H1 (cell line): ENCODE measurements at regions of chr14 and their contacts with region 1.

Region 1: DNA sequence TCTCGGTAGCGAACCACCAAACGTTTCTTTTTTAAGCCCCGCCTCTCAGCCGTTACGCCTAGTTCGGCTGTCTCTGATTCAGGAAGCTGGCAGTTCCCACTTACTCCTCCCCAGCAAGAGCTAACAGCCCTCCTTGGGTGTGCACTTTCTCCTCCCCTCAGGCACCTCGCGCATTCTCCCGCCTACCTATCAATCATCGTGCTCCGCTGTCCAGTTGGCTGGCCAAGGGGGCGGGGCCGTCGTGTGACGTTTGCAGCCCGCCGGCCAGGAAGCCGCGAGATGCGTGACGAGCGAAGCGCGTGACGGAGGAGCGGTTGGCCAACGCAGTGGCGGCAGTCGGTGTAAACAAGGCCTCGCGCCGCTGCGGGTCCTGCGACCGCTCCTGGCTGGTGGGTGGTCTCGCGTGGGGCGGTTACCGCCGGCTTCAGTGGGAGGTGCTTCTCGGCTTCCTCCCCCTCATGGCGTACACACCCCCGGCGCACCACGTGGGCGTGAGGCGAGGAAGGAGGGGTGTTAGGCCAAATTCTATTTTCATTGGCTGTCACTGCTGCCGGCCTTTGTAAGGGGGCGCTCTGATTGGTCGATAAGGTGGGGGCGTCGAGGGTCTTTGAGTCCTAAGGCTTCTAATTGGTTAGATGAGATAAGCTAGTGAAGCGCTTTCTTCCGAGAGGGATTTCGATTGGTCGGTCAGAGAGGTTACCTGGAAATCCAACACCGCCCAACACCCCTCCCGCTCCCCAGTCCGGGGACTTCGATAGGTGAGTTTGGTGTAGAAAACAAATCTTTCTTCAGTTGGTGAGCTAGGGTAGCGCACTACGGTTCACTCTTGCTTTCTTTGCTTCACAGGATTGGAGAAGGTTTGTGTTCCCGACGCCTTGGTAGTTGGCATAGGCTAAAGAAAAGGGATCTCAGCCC is at the starts of genes DCAF11 and NRL:
- DNase-seq: peak; percentile 96 to 99
- H3K4me3 ChIP-seq: peak within 1 kb of the TSS; percentile 68 to 89 (median 76)
- H3K27ac ChIP-seq: peak within 1 kb of the TSS; percentile 97
- H3K4me1 ChIP-seq: peaks cover 0 to 4% (median 2%) of the 10 kb centered on the region in 4 experiments; a peak in 5 of 7 replicates
- H3K27me3 ChIP-seq: no peaks in the 10 kb centered on the region
- CTCF ChIP-seq: no peak
- EP300 ChIP-seq: no peak
- POLR2A ChIP-seq: peak; percentile 45 to 75
- RAD21 ChIP-seq: no peak
- total RNA-seq, gene DCAF11: 63.6 and 67.2 TPM in 2 replicates
- total RNA-seq, gene NRL: 1.1 TPM in 2 replicates

Region 2: GRCh38 chr14:23640524-23641141 is 474.2 kb before region 1 on chr14:
- CTCF ChIA-PET with region 1: no interaction called
- POLR2A ChIA-PET with region 1: no interaction called
- DNase-seq: no peak
- H3K4me3 ChIP-seq: no peak overlapping the region
- H3K27ac ChIP-seq: no peak overlapping the region
- H3K4me1 ChIP-seq: peaks cover 2 to 6% (median 2%) of the 10 kb centered on the region in 4 experiments; a peak in 5 of 7 replicates
- H3K27me3 ChIP-seq: no peaks in the 10 kb centered on the region
- CTCF ChIP-seq: no peak
- EP300 ChIP-seq: no peak
- POLR2A ChIP-seq: no peak
- RAD21 ChIP-seq: no peak

Region 3: DNA sequence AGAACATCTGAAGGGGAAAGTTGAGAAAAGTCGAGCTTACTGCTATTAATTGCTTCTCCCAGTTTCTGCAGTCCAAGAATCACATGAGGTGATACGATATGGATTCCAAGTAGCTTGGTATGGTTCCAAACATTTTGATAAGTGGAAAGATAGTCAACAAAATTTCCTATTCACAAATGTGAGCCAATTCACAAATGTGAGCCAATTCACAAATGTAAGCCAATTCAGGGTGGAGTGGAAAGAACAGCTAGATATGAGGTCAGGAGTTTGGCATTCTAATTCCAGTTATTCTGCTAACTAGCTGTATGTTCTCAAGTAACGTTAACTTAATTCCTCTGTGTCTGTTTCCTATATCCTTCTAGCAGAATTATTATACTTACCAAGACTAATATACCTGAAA is 198.8 kb before region 1 on chr14:
- CTCF ChIA-PET with region 1: no interaction called
- POLR2A ChIA-PET with region 1: no interaction called
- DNase-seq: no peak
- H3K4me3 ChIP-seq: no peak overlapping the region
- H3K27ac ChIP-seq: no peak overlapping the region
- H3K4me1 ChIP-seq: peaks cover 0 to 6% (median 2%) of the 10 kb centered on the region in 4 experiments; a peak in 3 of 7 replicates
- H3K27me3 ChIP-seq: no peaks in the 10 kb centered on the region
- CTCF ChIP-seq: no peak
- EP300 ChIP-seq: no peak
- POLR2A ChIP-seq: no peak
- RAD21 ChIP-seq: no peak

Region 4: DNA sequence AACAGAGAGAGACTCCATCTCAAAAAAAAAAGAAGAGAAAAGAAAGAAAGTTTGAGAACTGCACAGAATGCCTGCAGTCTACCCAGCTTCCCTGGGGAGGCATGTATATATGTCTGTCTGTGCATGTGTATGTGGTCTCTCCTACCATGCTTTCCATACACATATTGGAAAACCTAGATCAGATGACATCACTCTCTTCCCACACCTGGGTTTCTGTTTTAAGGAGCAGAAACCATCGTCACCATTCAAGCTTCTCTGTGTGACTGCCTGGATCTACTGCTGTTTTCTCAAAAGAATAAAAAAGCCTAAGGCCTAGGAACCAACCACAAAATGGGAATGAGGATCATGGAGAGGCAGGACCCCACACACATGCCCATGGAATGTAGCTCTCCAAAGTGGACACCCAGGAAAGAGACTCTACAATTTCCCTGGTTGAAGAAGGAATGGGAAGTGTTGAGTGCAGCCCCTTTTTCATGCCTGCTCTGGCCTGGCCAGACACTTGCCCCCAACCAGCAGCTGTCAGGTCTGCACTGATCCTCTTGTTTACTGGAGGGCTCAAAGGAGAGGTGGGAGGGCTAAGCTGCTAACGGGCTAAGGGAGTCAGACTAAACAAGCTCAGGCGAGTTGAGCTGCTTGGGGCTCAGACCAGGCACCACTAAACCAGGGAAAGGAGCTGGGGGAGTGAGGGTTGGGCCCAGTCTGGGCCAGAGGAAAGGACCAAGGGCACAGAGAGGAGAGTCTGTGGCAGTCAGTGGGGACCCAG is 28.4 kb before region 1 on chr14:
- CTCF ChIA-PET with region 1: interaction called, 160 read pairs
- POLR2A ChIA-PET with region 1: interaction called, 626 read pairs
- DNase-seq: no peak
- H3K4me3 ChIP-seq: no peak overlapping the region
- H3K27ac ChIP-seq: no peak overlapping the region
- H3K4me1 ChIP-seq: peaks cover 0 to 6% (median 4%) of the 10 kb centered on the region in 4 experiments; a peak in 6 of 7 replicates
- H3K27me3 ChIP-seq: peaks cover 0 to 10% (median 7%) of the 10 kb centered on the region in 4 experiments; a peak in 5 of 7 replicates
- CTCF ChIP-seq: no peak
- EP300 ChIP-seq: no peak
- POLR2A ChIP-seq: no peak
- RAD21 ChIP-seq: no peak

Region 5: GRCh38 chr14:24141097-24141880 is 26.5 kb after region 1 on chr14 and contains the start of gene EMC9:
- CTCF ChIA-PET with region 1: interaction called, 10 read pairs
- POLR2A ChIA-PET with region 1: interaction called, 118 read pairs
- DNase-seq: peak; percentile 98 to 100
- H3K4me3 ChIP-seq: peak within 1 kb of the TSS; percentile 79 to 99 (median 94)
- H3K27ac ChIP-seq: peak within 1 kb of the TSS; percentile 92
- H3K4me1 ChIP-seq: peaks cover 4 to 13% (median 7%) of the 10 kb centered on the region in 4 experiments; a peak in 6 of 7 replicates
- H3K27me3 ChIP-seq: no peaks in the 10 kb centered on the region
- CTCF ChIP-seq: peak; percentile 23 to 48 (median 26); a peak in 3 of 4 replicates
- EP300 ChIP-seq: no peak
- POLR2A ChIP-seq: peak; percentile 81 to 84
- RAD21 ChIP-seq: no peak
- total RNA-seq, gene EMC9: 36.9 and 38.4 TPM in 2 replicates

Region 6: GRCh38 chr14:24146978-24147760 is 32.4 kb after region 1 on chr14 and contains the start of gene RNF31:
- CTCF ChIA-PET with region 1: interaction called, 9 read pairs
- POLR2A ChIA-PET with region 1: interaction called, 14 read pairs
- DNase-seq: peak; percentile 93 to 96
- H3K4me3 ChIP-seq: peak within 1 kb of the TSS; percentile 92 to 98 (median 96)
- H3K27ac ChIP-seq: peak within 1 kb of the TSS; percentile 45; the same call in 1 of the 2 replicates
- H3K4me1 ChIP-seq: peaks cover 0 to 10% (median 7%) of the 10 kb centered on the region in 4 experiments; a peak in 5 of 7 replicates
- H3K27me3 ChIP-seq: no peaks in the 10 kb centered on the region
- CTCF ChIP-seq: no peak
- EP300 ChIP-seq: no peak
- POLR2A ChIP-seq: peak in 1 of 2 experiments; percentile 55; a peak in 1 of 3 replicates
- RAD21 ChIP-seq: no peak
- total RNA-seq, gene RNF31: 57.8 and 72.0 TPM in 2 replicates

Region 7: DNA sequence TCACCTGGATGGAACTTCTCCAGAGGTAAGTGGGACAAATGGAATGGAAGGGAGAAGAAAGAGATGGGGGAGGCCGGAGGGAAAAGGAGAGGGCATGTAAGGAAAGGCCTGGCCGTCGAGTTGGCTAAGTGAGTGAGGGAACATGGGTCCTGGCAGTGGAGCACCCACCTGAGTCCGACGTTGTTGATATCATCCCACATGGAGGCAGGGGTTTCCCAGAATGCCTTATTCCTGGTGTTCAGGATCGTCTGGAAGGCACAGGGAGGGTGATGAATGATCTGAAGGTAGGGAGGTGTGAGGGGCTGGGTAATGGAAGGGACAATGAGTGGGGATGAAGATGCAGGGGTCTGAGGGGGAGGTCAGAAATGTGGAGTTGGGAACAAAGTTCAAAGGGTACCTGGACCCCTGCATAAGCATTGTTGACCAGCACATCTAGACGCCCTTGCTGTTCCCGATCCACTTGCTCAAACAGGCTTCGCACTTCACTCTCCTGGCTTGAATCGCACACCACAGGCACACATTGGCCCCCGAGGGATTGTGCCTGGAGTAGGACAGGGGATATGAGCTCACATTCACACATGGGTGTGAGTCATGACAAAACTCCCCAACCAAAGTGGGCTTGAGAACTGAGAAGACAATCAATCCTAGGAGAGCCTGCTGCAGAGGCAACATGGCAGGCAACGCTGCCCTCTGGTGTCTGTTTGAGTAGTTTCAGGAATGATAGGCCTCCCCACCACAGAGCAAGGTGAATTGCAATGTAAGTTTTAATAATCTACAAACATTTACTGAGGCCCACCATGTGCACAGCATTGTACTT is 181.8 kb after region 1 on chr14:
- CTCF ChIA-PET with region 1: no interaction called
- POLR2A ChIA-PET with region 1: no interaction called
- DNase-seq: peak; percentile 57 to 62
- H3K4me3 ChIP-seq: no peak overlapping the region
- H3K27ac ChIP-seq: no peak overlapping the region
- H3K4me1 ChIP-seq: peaks cover 0 to 7% (median 4%) of the 10 kb centered on the region in 4 experiments; a peak in 5 of 7 replicates
- H3K27me3 ChIP-seq: no peaks in the 10 kb centered on the region
- CTCF ChIP-seq: peak; percentile 72 to 83 (median 76)
- EP300 ChIP-seq: no peak
- POLR2A ChIP-seq: no peak
- RAD21 ChIP-seq: peak; percentile 86 to 87